ENCODE measurements at regions of chr9 and their contacts with region 1.

Region 1: GRCh38 chr9:32968101-32969011 is 33.1 kb downstream of the APTX start:
- DNase-seq: peak; percentile 55 to 90
- H3K4me3 ChIP-seq: no peak overlapping the region
- CTCF ChIP-seq: no peak
- POLR2A ChIP-seq: no peak

Region 2: DNA sequence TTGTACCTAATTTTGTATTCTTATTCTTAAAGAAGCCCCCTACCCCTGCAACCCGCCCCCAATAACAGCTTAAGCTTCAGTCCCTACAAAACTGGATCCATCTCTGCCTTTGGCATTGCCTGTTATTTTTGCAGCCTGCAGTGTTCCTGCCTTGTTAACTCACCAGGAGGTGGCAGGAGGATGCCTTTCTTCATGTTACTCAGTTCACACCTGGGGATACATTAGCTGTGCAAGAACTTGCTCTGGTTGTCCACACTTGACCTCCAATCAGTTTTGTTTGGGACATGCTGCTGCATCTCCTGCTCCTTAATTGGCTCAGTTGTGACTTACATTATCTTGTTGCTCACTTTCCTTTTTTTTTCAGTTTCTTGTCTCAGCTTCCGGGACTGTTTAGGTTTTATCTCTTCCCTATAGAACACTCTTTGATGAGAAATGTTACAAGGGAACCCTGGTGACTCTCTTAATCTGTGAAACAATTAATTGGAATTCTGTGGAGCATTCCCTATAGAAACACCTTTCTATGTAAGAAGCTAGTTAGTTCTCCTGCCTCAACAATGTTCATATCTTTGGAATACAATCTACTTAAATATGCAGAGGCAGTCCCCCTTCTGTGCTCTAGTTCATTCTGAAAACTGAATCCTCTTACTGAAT is 1051.6 kb before region 1 on chr9:
- intact Hi-C with region 1: loop called (anchors 10 kb)
- DNase-seq: no peak
- H3K4me3 ChIP-seq: no peak overlapping the region
- CTCF ChIP-seq: no peak
- POLR2A ChIP-seq: no peak

Region 3: GRCh38 chr9:32589083-32589723 is 379.2 kb before region 1 on chr9:
- intact Hi-C with region 1: loop called (anchors 5 kb)
- DNase-seq: no peak
- H3K4me3 ChIP-seq: no peak overlapping the region
- CTCF ChIP-seq: no peak
- POLR2A ChIP-seq: no peak

Region 4: DNA sequence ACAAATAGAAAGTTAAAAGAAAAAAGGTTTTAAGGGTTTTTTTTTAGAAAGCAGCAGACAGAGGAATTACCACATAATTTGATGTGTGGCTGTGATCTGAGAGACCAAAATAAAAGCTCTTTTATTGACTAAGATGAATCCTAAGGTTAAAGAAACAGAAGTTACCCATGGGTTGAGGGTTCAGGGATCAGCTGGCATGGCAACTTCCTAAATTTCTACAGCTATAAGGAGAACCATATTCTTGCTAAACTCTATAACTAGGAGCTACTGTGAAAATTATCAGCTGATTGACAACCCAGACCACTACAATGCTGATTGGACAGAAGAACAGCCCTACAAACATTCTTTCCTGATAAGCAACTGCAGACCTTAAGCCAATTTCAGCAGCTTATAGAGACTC is 144.8 kb before region 1 on chr9:
- intact Hi-C with region 1: no loop called
- DNase-seq: no peak
- H3K4me3 ChIP-seq: no peak overlapping the region
- CTCF ChIP-seq: no peak
- POLR2A ChIP-seq: no peak

Region 5: GRCh38 chr9:32866273-32866672 is 102.1 kb before region 1 on chr9:
- intact Hi-C with region 1: no loop called
- DNase-seq: no peak
- H3K4me3 ChIP-seq: no peak overlapping the region
- CTCF ChIP-seq: no peak
- POLR2A ChIP-seq: no peak

Region 6: GRCh38 chr9:33159760-33160127 is 191.4 kb after region 1 on chr9:
- intact Hi-C with region 1: no loop called
- DNase-seq: peak; percentile 71 to 90
- H3K4me3 ChIP-seq: no peak overlapping the region
- CTCF ChIP-seq: no peak
- POLR2A ChIP-seq: no peak

Measured in lower leg skin (tissue), 4 donors.